Mammary epithelial cell (primary cell): ENCODE measurements at regions of chr20 and their contacts with region 1.

Region 1: GRCh38 chr20:1130847-1131246 is 12.4 kb downstream of the PSMF1 start:
- DNase-seq: no peak
- H3K4me3 ChIP-seq: no peak overlapping the region
- H3K27ac ChIP-seq: no peak overlapping the region
- H3K4me1 ChIP-seq: no peaks in the 10 kb centered on the region
- H3K27me3 ChIP-seq: no peaks in the 10 kb centered on the region
- CTCF ChIP-seq: no peak

Region 2: DNA sequence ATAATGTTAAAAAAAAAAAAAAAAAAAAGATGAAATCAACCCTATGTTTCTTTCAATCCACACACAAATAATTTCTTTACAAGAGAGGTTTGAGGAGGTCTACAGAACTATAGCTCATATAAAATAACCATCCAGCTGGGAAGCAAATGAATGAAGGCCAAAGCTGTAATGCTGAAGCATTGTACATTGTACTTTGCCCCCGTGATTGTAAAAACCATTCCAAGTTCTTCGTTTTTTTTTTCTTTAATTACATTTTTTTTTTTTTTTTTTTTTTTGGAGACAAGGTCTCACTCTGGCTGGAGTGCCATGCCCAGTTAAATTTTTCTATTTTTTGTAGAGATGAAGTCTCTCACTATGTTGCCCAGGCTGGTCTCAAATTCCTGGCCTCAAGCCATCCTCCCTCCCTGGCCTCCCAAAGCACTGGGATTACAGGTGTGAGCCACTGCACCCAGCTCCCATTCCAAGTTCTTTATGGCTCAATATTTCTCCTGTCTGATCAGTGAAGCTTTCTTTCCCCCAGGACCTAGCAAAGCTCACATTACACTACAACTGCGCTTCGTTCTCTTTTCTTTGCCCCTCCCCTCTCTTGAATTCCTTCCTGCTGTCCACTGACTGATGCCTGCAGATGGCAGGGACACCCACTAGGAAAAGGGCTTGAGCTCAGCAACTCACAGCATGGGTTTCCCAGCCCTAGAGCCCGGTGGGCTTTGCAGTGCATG is 1468.6 kb after region 1 on chr20:
- CTCF ChIA-PET with region 1: no interaction called
- dilution Hi-C with region 1: no loop called
- in situ Hi-C with region 1: no loop called
- intact Hi-C with region 1: loop called (anchors 10 kb)
- DNase-seq: no peak
- H3K4me3 ChIP-seq: no peak overlapping the region
- H3K27ac ChIP-seq: no peak overlapping the region
- H3K4me1 ChIP-seq: no peaks in the 10 kb centered on the region
- H3K27me3 ChIP-seq: no peaks in the 10 kb centered on the region
- CTCF ChIP-seq: no peak